ENCODE measurements at regions of chr12 and their contacts with region 1.

Region 1: GRCh38 chr12:32755654-32756475 is at the start of gene YARS2:
- DNase-seq: peak; percentile 93
- ATAC-seq: peak; percentile 89
- H3K4me3 Mint-ChIP-seq: peak within 1 kb of the TSS; percentile 90
- H3K27ac Mint-ChIP-seq: peak within 1 kb of the TSS; percentile 87
- H3K4me1 Mint-ChIP-seq: peaks cover 18% of the 10 kb centered on the region
- H3K27me3 Mint-ChIP-seq: no peaks in the 10 kb centered on the region
- CTCF ChIP-seq: peak; percentile 80
- total RNA-seq, gene YARS2: 29.3 to 31.8 TPM

Region 2: DNA sequence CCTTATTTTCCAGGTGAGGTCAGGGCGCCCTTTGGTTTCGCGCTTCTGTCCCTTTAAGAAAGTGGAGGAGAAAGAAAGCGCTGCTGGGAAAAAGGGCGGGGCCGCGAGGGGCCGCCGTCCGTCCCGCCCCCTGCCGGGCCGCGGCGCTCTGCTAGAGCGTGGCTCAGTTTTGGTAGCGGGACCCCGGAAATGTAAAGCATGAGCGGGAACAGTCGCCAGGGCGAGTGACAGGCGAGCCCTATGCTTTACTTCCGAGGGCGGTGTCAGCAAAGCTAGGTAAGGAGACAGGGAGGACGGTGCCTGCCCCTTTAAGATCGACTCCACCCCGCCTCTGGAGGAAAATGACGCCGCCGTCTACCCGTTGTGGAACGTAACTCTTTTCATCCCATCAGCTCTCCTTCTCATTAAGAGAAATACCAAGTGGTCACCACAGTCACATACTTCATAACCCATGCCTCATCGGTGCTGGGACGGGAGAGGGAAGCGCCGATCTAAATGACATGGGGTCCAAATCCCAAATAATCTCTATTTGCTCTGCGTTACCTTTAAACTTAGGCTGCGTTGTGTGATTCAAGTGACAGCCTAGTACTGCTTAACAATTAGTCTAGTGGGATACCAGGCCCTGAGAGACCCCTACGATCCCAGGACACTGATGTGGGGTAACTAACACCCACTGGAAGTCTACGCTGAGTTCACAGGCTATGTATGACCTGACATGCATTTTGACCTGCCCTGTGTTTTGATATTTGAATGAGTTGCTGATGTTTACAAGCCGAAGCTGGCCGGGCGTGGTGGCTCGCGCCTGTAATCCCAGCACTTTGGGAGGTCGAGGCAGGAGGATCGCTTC is 1096.6 kb before region 1 on chr12 and contains the start of gene ETFBKMT:
- CTCF ChIA-PET with region 1: no interaction called
- POLR2A ChIA-PET with region 1: no interaction called
- intact Hi-C with region 1: loop called (anchors 10 kb)
- DNase-seq: peak; percentile 97
- ATAC-seq: peak; percentile 99
- H3K4me3 Mint-ChIP-seq: peak within 1 kb of the TSS; percentile 92
- H3K27ac Mint-ChIP-seq: peak within 1 kb of the TSS; percentile 98
- H3K4me1 Mint-ChIP-seq: peaks cover 8% of the 10 kb centered on the region
- H3K27me3 Mint-ChIP-seq: no peaks in the 10 kb centered on the region
- CTCF ChIP-seq: no peak
- total RNA-seq, gene ETFBKMT: 0.99 to 1.1 TPM

Region 3: GRCh38 chr12:32455607-32456071 is 300.2 kb before region 1 on chr12:
- CTCF ChIA-PET with region 1: interaction called, 34 read pairs
- POLR2A ChIA-PET with region 1: no interaction called
- intact Hi-C with region 1: no loop called
- DNase-seq: peak; percentile 22
- ATAC-seq: no peak
- H3K4me3 Mint-ChIP-seq: no peak overlapping the region
- H3K27ac Mint-ChIP-seq: no peak overlapping the region
- H3K4me1 Mint-ChIP-seq: no peaks in the 10 kb centered on the region
- H3K27me3 Mint-ChIP-seq: no peaks in the 10 kb centered on the region
- CTCF ChIP-seq: peak; percentile 72

Region 4: GRCh38 chr12:32727237-32727636 is 28.6 kb before region 1 on chr12:
- CTCF ChIA-PET with region 1: interaction called, 10 read pairs
- POLR2A ChIA-PET with region 1: no interaction called
- intact Hi-C with region 1: no loop called
- DNase-seq: no peak
- ATAC-seq: no peak
- H3K4me3 Mint-ChIP-seq: no peak overlapping the region
- H3K27ac Mint-ChIP-seq: peak overlapping the region; percentile 51
- H3K4me1 Mint-ChIP-seq: no peaks in the 10 kb centered on the region
- H3K27me3 Mint-ChIP-seq: no peaks in the 10 kb centered on the region
- CTCF ChIP-seq: no peak

Region 5: GRCh38 chr12:32743264-32743663 is 12.6 kb before region 1 on chr12:
- CTCF ChIA-PET with region 1: interaction called, 25 read pairs
- POLR2A ChIA-PET with region 1: interaction called, 3 read pairs
- intact Hi-C with region 1: no loop called
- DNase-seq: no peak
- ATAC-seq: no peak
- H3K4me3 Mint-ChIP-seq: no peak overlapping the region
- H3K27ac Mint-ChIP-seq: peak overlapping the region; percentile 52
- H3K4me1 Mint-ChIP-seq: peaks cover 16% of the 10 kb centered on the region
- H3K27me3 Mint-ChIP-seq: no peaks in the 10 kb centered on the region
- CTCF ChIP-seq: no peak

Region 6: DNA sequence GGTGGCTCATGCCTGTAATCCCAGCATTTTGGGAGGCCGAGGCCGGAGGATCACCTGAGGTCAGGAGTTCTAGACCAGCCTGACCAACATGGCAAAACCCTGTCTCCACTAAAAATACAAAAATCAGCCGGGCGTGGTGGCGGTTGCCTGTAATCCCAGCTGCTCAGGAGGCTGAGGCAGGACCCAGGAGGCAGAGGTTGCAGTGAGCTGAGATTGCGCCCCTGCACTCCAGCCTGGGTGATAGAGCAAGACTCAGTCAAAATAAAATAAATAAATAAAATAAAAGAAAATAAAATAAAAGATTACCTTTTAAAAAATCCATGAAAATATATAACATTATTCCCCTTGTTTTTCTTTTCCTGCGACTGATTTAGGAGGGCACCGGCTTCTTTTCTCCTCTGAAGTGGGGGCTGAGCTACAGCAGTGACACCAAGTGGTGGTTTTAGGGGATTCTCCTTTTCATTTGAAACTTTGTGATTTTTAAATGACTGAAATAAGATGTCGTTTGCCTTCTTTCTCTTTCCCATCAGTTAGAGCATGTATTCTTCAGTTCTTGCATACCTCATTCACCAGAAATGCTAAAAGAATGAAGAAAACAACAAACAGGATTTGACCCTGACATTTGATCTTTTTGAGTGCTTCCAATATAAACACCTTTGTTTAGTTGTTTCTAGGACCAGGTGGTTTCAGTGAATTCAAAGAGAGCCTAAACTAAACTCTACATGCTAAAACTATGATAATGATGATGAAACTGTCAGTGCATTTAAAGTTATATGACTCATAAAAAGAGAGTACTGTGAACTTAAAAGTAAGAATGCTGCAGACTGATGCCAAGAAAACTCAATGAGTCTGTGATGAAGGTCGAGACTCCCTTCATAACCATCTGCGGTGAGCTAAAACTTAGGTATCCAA is 163.3 kb after region 1 on chr12:
- CTCF ChIA-PET with region 1: interaction called, 30 read pairs
- POLR2A ChIA-PET with region 1: no interaction called
- intact Hi-C with region 1: loop called (anchors 5 kb)
- DNase-seq: peak; percentile 4
- ATAC-seq: no peak
- H3K4me3 Mint-ChIP-seq: no peak overlapping the region
- H3K27ac Mint-ChIP-seq: no peak overlapping the region
- H3K4me1 Mint-ChIP-seq: no peaks in the 10 kb centered on the region
- H3K27me3 Mint-ChIP-seq: peaks cover 11% of the 10 kb centered on the region
- CTCF ChIP-seq: peak; percentile 39

Region 7: GRCh38 chr12:34022079-34022830 is 1266.4 kb after region 1 on chr12 and contains the start of gene ALG10:
- CTCF ChIA-PET with region 1: interaction called, 67 read pairs
- POLR2A ChIA-PET with region 1: interaction called, 5 read pairs
- intact Hi-C with region 1: loop called (anchors 2 kb)
- DNase-seq: peak; percentile 96
- ATAC-seq: peak; percentile 99
- H3K4me3 Mint-ChIP-seq: peak within 1 kb of the TSS; percentile 97
- H3K27ac Mint-ChIP-seq: peak within 1 kb of the TSS; percentile 97
- H3K4me1 Mint-ChIP-seq: peaks cover 13% of the 10 kb centered on the region
- H3K27me3 Mint-ChIP-seq: no peaks in the 10 kb centered on the region
- CTCF ChIP-seq: peak; percentile 65
- total RNA-seq, gene ALG10: 20.3 to 22.8 TPM